ENCODE measurements at regions of chrX and their contacts with region 1.

Region 1: DNA sequence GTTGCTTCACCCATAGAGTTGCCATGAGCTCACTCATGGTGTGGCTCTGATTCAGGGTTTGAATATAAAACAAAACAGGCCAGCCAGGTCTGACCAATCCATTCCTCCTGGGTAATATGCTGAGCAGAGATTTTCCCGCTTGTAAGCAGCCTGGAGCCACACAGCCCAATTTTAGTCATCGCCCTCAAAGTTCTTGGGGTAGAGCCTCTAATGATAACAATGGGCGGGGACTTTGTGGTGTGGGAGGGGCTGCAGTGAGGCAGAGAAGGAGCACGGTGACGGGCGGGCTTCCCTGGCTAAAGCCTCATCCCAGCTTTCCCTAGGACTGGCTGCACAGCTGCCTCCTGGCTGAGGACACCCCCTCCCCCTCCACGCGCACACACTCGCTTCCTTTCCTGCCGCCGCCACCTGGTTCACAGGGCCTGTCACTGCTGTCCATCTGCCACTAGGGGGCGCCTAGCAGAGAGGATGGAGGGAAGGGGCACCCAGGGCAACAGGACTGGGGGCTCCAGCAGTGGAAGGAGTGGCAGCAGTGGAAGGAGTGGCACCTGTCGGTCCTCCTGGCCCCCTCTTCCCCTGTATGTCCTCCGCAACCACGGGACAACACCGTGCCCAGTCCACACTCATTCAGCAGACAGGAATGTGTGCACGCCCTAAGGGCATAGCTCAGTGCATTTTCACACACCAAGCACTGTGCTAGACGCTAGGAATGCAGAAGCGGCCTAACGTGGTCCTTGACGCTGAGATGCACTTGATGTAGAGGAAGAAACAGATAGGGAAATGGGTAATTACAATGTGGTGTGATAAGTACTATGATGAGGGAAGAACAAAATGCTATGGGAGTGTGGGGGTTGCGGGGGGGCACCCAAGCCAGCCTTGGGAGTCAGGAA is 26.8 kb downstream of the PRPS1 start:
- DNase-seq: no peak
- ATAC-seq: peak; percentile 96
- H3K4me3 ChIP-seq: no peak overlapping the region
- H3K27ac ChIP-seq: no peak overlapping the region
- H3K4me1 ChIP-seq: no peaks in the 10 kb centered on the region
- H3K27me3 ChIP-seq: no peaks in the 10 kb centered on the region
- CTCF ChIP-seq: peak; percentile 61 to 90 (median 80)
- EP300 ChIP-seq: no peak
- POLR2A ChIP-seq: peak; percentile 49; the same call in 1 of the 2 replicates
- RAD21 ChIP-seq: peak; percentile 40

Region 2: GRCh38 chrX:107602694-107603239 is 52.4 kb before region 1 on chrX:
- CTCF ChIA-PET with region 1: no interaction called
- POLR2A ChIA-PET with region 1: no interaction called
- RAD21 ChIA-PET with region 1: no interaction called
- SMC1A ChIA-PET with region 1: no interaction called
- in situ Hi-C with region 1: no loop called
- intact Hi-C with region 1: loop called (anchors 5 kb)
- DNase-seq: no peak
- ATAC-seq: no peak
- H3K4me3 ChIP-seq: no peak overlapping the region
- H3K27ac ChIP-seq: no peak overlapping the region
- H3K4me1 ChIP-seq: no peaks in the 10 kb centered on the region
- H3K27me3 ChIP-seq: no peaks in the 10 kb centered on the region; a peak in 1 of 4 replicates
- CTCF ChIP-seq: no peak
- EP300 ChIP-seq: no peak
- POLR2A ChIP-seq: no peak
- RAD21 ChIP-seq: no peak

Region 3: GRCh38 chrX:107627838-107628661 is 27.1 kb before region 1 on chrX and contains the start of gene PRPS1:
- CTCF ChIA-PET with region 1: interaction called, 50 read pairs
- POLR2A ChIA-PET with region 1: no interaction called
- RAD21 ChIA-PET with region 1: no interaction called
- SMC1A ChIA-PET with region 1: interaction called, 5 read pairs
- in situ Hi-C with region 1: no loop called
- intact Hi-C with region 1: no loop called
- DNase-seq: peak; percentile 75
- ATAC-seq: peak; percentile 98
- H3K4me3 ChIP-seq: peak within 1 kb of the TSS; percentile 74
- H3K27ac ChIP-seq: peak within 1 kb of the TSS; percentile 73
- H3K4me1 ChIP-seq: no peaks in the 10 kb centered on the region
- H3K27me3 ChIP-seq: no peaks in the 10 kb centered on the region
- CTCF ChIP-seq: no peak
- EP300 ChIP-seq: no peak
- POLR2A ChIP-seq: peak; percentile 83
- RAD21 ChIP-seq: no peak
- polyA plus RNA-seq, gene PRPS1: 31.2 to 31.5 TPM

Region 4: GRCh38 chrX:107731831-107732502 is 76.8 kb after region 1 on chrX:
- CTCF ChIA-PET with region 1: interaction called, 10 read pairs
- POLR2A ChIA-PET with region 1: no interaction called
- RAD21 ChIA-PET with region 1: interaction called, 6 read pairs
- SMC1A ChIA-PET with region 1: no interaction called
- in situ Hi-C with region 1: no loop called
- intact Hi-C with region 1: no loop called
- DNase-seq: no peak
- ATAC-seq: no peak
- H3K4me3 ChIP-seq: no peak overlapping the region
- H3K27ac ChIP-seq: no peak overlapping the region
- H3K4me1 ChIP-seq: no peaks in the 10 kb centered on the region
- H3K27me3 ChIP-seq: no peaks in the 10 kb centered on the region
- CTCF ChIP-seq: no peak
- EP300 ChIP-seq: no peak
- POLR2A ChIP-seq: no peak
- RAD21 ChIP-seq: no peak

Region 5: DNA sequence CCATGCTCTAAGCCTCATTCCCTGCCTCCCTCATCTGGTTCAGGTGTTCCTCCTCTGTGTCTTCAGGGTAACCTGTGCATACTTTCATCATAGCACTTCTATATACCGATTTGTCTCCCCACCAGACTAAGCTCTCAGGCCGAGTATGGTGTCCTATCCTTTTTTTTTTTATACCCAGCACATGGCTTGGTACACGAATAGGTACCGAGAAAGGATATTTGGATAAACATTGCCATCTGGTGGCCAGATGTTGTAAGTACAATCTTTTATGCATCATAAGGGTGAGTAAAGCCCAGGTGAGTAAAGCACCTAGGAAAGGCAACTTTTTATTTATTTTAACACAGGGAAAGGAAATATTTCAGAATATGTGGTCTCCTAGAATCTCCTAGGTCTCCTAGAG is 238.9 kb after region 1 on chrX:
- CTCF ChIA-PET with region 1: interaction called, 4 read pairs
- POLR2A ChIA-PET with region 1: no interaction called
- RAD21 ChIA-PET with region 1: interaction called, 4 read pairs
- SMC1A ChIA-PET with region 1: no interaction called
- in situ Hi-C with region 1: loop called (anchors 10 kb)
- intact Hi-C with region 1: loop called (anchors 2 kb)
- DNase-seq: peak; percentile 20
- ATAC-seq: peak; percentile 87
- H3K4me3 ChIP-seq: no peak overlapping the region
- H3K27ac ChIP-seq: no peak overlapping the region
- H3K4me1 ChIP-seq: no peaks in the 10 kb centered on the region
- H3K27me3 ChIP-seq: no peaks in the 10 kb centered on the region
- CTCF ChIP-seq: peak; percentile 47 to 63 (median 54)
- EP300 ChIP-seq: no peak
- POLR2A ChIP-seq: no peak
- RAD21 ChIP-seq: peak; percentile 68

Measured in GM12878 (cell line).